Activated B cell treated with CpG ODN at 0.5 μM for 24 hours (primary cell): ENCODE measurements at regions of chr1 and their contacts with region 1.

Region 1: GRCh38 chr1:17635811-17636210 is 96.3 kb downstream of the ARHGEF10L start:
- DNase-seq: peak; percentile 48
- ATAC-seq: peak; percentile 84
- H3K4me3 Mint-ChIP-seq: peak overlapping the region; percentile 42
- H3K27ac Mint-ChIP-seq: peak overlapping the region; percentile 70
- H3K4me1 Mint-ChIP-seq: peaks cover 30% of the 10 kb centered on the region
- H3K27me3 Mint-ChIP-seq: peaks cover 5% of the 10 kb centered on the region
- CTCF ChIP-seq: no peak

Region 2: GRCh38 chr1:17439250-17440073 is 196.3 kb before region 1 on chr1 and contains the start of gene RCC2:
- CTCF ChIA-PET with region 1: no interaction called
- POLR2A ChIA-PET with region 1: no interaction called
- intact Hi-C with region 1: loop called (anchors 2 kb)
- DNase-seq: peak; percentile 67
- ATAC-seq: peak; percentile 67
- H3K4me3 Mint-ChIP-seq: peak within 1 kb of the TSS; percentile 96
- H3K27ac Mint-ChIP-seq: peak within 1 kb of the TSS; percentile 98
- H3K4me1 Mint-ChIP-seq: peaks cover 39% of the 10 kb centered on the region
- H3K27me3 Mint-ChIP-seq: peaks cover 11% of the 10 kb centered on the region
- CTCF ChIP-seq: no peak
- total RNA-seq, gene RCC2: 79.4 and 85.1 TPM in 2 replicates

Region 3: GRCh38 chr1:17944606-17945005 is 308.8 kb after region 1 on chr1:
- CTCF ChIA-PET with region 1: no interaction called
- POLR2A ChIA-PET with region 1: no interaction called
- intact Hi-C with region 1: no loop called
- DNase-seq: no peak
- ATAC-seq: no peak
- H3K4me3 Mint-ChIP-seq: no peak overlapping the region
- H3K27ac Mint-ChIP-seq: no peak overlapping the region
- H3K4me1 Mint-ChIP-seq: no peaks in the 10 kb centered on the region
- H3K27me3 Mint-ChIP-seq: peaks cover 16% of the 10 kb centered on the region
- CTCF ChIP-seq: no peak